ENCODE measurements at regions of chr2 and their contacts with region 1.

Region 1: GRCh38 chr2:73828818-73829570 is at the start of gene STAMBP:
- DNase-seq: peak; percentile 93
- H3K4me3 Mint-ChIP-seq: peak within 1 kb of the TSS; percentile 95
- H3K27ac Mint-ChIP-seq: peak within 1 kb of the TSS; percentile 93
- H3K4me1 Mint-ChIP-seq: peaks cover 43% of the 10 kb centered on the region
- H3K27me3 Mint-ChIP-seq: no peaks in the 10 kb centered on the region
- total RNA-seq, gene STAMBP: 51.1 to 51.2 TPM

Region 2: DNA sequence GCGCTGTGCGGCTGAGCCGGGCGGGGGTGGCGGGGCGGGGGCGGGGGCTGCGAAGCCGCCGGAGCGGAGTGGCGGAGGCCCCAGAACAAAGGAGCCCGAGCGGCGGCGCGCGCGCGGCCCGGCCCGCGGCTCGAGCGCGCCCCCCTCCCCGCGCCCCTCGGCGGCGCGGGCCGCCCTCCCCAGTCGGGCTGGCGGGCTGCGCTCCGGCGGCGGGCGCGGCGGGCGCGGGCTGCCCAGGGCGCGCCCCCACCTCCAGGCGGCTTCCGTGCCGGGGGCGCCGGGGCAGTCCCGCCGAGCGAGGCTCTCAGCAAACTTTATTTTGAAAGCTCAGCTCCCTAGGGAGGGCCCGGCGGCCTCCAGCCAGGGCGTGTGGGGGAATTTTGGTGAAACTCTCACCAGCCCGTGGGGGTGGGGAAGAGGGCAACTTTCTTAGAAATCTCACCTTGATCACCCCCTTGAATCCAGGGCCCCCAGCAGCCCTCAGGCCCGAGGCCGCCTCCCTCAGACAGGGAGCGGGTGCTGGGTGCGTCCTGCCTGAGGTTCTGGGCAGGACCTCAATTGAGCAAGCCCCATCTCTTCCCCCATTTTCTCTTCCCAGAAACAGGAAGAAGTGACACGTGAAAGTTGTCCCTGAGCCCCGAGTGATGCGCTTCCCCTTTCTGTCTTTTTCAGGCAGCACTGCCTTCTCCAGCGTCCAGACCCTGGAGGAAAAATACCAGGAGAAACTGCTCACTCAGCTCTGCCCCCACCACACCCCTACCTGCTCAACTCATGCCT is 156.5 kb after region 1 on chr2:
- CTCF ChIA-PET with region 1: interaction called, 37 read pairs
- POLR2A ChIA-PET with region 1: interaction called, 4 read pairs
- DNase-seq: peak; percentile 42
- H3K4me3 Mint-ChIP-seq: peak overlapping the region; percentile 71
- H3K27ac Mint-ChIP-seq: peak overlapping the region; percentile 81
- H3K4me1 Mint-ChIP-seq: peaks cover 64% of the 10 kb centered on the region
- H3K27me3 Mint-ChIP-seq: peaks cover 19% of the 10 kb centered on the region

Region 3: GRCh38 chr2:74104839-74105238 is 275.8 kb after region 1 on chr2:
- CTCF ChIA-PET with region 1: interaction called, 12 read pairs
- POLR2A ChIA-PET with region 1: no interaction called
- DNase-seq: no peak
- H3K4me3 Mint-ChIP-seq: no peak overlapping the region
- H3K27ac Mint-ChIP-seq: no peak overlapping the region
- H3K4me1 Mint-ChIP-seq: no peaks in the 10 kb centered on the region
- H3K27me3 Mint-ChIP-seq: no peaks in the 10 kb centered on the region

Region 4: DNA sequence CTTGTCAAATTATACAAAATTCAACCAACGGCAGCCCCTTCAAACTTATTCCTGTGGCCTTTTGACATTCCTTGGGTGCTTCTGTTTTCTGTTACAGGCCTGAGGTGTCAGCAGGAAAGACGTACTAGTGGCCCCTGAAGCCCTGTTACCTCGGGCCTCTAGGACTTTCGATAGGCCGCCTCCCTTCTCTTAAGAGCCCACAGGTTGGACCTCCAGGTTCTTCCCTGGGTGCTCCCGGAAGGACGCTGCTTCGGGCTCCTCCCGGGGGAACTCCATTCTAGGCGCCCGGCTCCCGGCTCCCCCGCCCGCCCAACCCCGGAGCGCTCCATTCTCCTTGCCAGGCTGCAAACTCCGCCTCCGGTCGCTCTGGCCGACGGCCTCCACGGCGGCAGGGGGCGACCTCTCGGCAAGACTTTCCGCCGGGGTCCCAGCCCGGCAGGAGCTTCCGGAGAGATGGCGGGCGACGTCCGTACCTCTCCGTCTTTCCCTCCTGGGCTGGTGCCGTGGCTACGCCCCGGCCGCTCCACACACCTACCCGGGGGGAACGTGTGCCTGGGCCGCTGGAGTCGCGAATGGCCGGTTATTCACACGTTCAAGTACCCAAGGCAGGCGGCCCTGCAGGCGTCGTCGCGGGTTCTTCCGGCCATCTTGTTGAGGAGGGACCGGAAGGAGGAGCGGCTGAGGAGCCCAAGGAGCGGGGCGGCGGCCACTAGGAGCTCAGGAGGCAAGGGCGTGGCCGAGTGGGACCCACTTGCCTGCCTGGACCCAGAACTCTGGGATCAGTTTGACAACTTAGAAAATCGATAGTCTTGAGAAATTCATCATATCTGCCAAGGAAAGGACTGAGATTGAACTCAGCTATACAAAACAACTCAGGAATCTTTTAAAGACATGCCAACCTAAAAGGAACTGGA is 291.2 kb after region 1 on chr2:
- CTCF ChIA-PET with region 1: interaction called, 11 read pairs
- POLR2A ChIA-PET with region 1: interaction called, 9 read pairs
- DNase-seq: peak; percentile 87
- H3K4me3 Mint-ChIP-seq: peak overlapping the region; percentile 79
- H3K27ac Mint-ChIP-seq: peak overlapping the region; percentile 81
- H3K4me1 Mint-ChIP-seq: peaks cover 16% of the 10 kb centered on the region
- H3K27me3 Mint-ChIP-seq: peaks cover 2% of the 10 kb centered on the region

Region 5: DNA sequence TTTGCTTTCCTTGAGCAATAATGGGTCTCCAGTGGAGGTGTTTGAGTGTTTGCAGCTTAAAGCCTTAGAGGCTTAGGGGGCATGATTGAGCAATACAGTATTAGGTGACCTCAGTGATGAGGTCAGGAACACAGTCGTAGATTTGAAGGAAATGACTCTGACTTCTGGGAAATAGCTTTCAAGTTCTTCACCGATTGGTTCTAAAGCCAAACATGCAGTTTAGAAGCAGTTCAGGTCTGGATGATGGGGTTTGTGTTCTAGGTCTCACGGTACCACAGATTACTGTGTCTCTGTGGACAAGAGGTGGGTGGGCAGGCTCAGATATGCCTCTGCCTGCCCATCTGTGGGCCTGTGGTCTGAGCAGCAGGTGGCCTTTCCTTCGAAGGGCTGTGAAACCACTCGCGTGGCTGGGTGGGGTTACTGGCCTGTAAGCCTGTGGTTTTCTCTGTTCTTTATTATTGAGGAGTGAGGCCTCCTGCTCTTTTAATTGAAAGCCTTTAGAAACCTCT is 377.2 kb after region 1 on chr2:
- CTCF ChIA-PET with region 1: interaction called, 3 read pairs
- POLR2A ChIA-PET with region 1: interaction called, 10 read pairs
- DNase-seq: peak; percentile 67
- H3K4me3 Mint-ChIP-seq: peak overlapping the region; percentile 64
- H3K27ac Mint-ChIP-seq: peak overlapping the region; percentile 96
- H3K4me1 Mint-ChIP-seq: peaks cover 78% of the 10 kb centered on the region
- H3K27me3 Mint-ChIP-seq: no peaks in the 10 kb centered on the region

Region 6: GRCh38 chr2:74391580-74392448 is 562.8 kb after region 1 on chr2:
- CTCF ChIA-PET with region 1: interaction called, 10 read pairs
- POLR2A ChIA-PET with region 1: interaction called, 3 read pairs
- DNase-seq: peak; percentile 95
- H3K4me3 Mint-ChIP-seq: peak overlapping the region; percentile 94
- H3K27ac Mint-ChIP-seq: peak overlapping the region; percentile 96
- H3K4me1 Mint-ChIP-seq: peaks cover 12% of the 10 kb centered on the region
- H3K27me3 Mint-ChIP-seq: peaks cover 6% of the 10 kb centered on the region